WTC11 (cell line): ENCODE measurements at regions of chr17 and their contacts with region 1.

Region 1: DNA sequence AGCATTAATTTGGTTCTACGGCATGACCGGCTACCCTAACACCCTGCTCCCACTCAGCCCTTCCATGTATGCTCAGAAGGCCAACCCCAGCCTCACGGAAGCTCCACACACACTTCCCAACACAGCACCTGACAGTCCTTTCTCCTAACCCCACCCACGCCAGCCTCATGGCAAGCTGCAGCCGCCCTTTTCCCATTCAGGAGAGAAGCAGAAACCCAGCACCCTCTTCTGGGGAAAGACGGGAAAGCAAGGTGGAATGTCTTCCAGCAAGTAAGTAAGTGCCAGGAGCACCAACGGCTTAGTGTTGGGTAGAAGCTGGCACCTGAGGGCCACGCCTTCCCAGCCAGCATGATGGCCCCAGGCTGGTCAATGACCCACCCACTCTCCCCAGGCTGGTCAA is 32.1 kb downstream of the ABR start:
- DNase-seq: peak; percentile 83
- ATAC-seq: peak; percentile 91
- H3K4me3 Mint-ChIP-seq: no peak overlapping the region
- H3K27ac Mint-ChIP-seq: no peak overlapping the region; the same call in 1 of the 2 replicates
- H3K4me1 Mint-ChIP-seq: peaks cover 2% of the 10 kb centered on the region; the same call in 1 of the 2 replicates
- H3K27me3 Mint-ChIP-seq: no peaks in the 10 kb centered on the region
- CTCF ChIP-seq: 0 out of 2 replicates have a peak, but pooled peaks have one; percentile 27

Region 2: GRCh38 chr17:1108861-1109605 is 38.6 kb before region 1 on chr17:
- CTCF ChIA-PET with region 1: interaction called, 11 read pairs
- POLR2A ChIA-PET with region 1: no interaction called
- DNase-seq: peak; percentile 38
- ATAC-seq: peak; percentile 11
- H3K4me3 Mint-ChIP-seq: peak overlapping the region; percentile 72
- H3K27ac Mint-ChIP-seq: no peak overlapping the region
- H3K4me1 Mint-ChIP-seq: peaks cover 32% of the 10 kb centered on the region
- H3K27me3 Mint-ChIP-seq: peaks cover 12% of the 10 kb centered on the region
- CTCF ChIP-seq: no peak

Region 3: DNA sequence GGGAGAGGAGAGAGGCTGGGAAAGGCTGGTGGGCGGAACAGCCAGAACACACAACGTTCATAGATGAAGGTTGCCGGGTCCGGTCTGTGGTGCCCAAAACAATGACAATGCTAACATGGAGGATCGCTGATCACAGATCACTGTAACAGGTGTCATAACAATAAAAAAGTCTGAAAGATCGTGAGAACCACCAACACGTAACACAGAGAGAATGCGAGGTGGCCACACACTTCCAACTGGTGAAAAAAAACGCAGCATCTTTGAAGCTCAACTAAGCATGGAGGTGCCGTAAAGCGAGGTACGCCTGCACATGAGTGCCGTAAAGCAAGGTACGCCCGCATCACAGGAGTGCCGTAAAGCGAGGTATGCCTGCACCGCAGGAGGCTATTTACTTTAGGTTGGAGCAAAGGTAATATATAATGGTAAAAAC is 10.2 kb before region 1 on chr17:
- CTCF ChIA-PET with region 1: interaction called, 15 read pairs
- POLR2A ChIA-PET with region 1: no interaction called
- DNase-seq: peak; percentile 55
- ATAC-seq: peak; percentile 60; the same call in 1 of the 2 replicates
- H3K4me3 Mint-ChIP-seq: no peak overlapping the region
- H3K27ac Mint-ChIP-seq: peak overlapping the region; percentile 71
- H3K4me1 Mint-ChIP-seq: peaks cover 18% of the 10 kb centered on the region
- H3K27me3 Mint-ChIP-seq: no peaks in the 10 kb centered on the region
- CTCF ChIP-seq: no peak